GM13976 (cell line): ENCODE measurements at regions of chr3 and their contacts with region 1.

Region 1: DNA sequence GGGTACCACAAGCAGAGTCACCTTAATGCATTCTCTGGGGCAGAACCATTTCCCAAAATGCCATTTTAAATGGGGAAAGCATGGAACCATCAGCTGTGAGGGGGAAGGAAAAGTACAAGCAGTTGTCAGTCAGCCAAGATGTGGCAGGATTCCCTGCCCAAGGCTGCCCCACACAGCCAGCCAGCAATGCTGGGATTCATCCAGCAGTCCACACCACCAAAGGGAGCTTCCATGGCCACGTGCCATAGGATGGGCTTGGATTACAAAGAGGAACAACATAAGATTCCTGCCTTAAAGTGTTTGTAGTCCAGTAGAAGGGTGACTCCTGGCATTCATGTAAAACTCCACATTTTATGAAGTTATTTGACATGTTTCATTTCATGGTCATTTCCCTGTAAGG is 233.3 kb downstream of the SHOX2 start:
- DNase-seq: no peak
- CTCF ChIP-seq: no peak

Region 2: DNA sequence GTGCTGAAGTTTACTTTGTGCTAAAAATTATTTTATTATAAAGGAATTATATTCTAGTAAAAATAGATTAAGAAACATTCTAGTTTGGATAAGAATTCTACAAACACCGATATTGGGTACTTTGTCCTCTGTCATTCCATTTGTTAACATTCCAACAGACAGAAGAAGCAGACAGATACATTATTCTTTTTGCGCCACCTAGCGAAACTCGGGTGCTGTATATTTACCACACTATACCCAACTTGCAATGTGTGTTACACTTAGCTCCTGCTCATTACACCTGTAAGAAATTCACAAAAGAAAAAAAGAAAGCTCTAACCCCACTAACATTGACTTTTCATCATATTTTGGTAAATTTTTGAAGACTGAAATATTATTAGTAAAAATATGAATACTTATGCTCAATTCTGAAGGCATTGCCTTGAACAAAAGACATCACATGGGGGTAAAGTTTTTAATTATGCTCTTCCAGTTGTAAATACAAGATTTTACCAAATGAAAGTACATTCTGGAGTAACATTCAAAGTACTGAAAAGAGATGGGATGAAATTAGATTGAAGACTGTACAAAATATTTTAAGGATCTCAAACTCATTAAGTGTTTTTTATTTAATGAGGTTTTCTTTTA is 561.6 kb after region 1 on chr3:
- in situ Hi-C with region 1: loop called (anchors 10 kb)
- DNase-seq: no peak
- CTCF ChIP-seq: peak; percentile 62

Region 3: DNA sequence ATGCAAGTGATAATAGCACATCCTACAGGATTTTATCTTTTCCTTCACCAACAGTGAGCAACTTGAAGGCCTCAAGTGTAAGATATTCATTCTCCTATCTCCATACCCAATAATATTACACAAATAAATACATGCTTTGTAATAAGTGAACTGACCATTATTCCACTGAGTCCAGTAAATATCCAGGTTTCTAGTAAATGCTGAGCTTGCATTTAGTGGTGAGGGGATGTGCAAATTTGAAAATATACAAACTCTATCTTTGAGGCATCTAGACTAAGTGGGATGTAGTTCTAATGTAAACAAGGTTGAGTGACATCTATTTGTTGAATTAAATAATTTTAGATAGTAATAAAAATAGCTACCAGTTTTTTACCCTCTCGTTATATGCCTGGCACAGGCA is 1528.2 kb after region 1 on chr3:
- in situ Hi-C with region 1: no loop called
- DNase-seq: no peak
- CTCF ChIP-seq: no peak